GM13976 (cell line): ENCODE measurements at regions of chr1 and their contacts with region 1.

Region 1: GRCh38 chr1:163071405-163072255 is 2.5 kb downstream of the RGS4 start:
- DNase-seq: peak; percentile 27
- CTCF ChIP-seq: peak; percentile 77

Region 2: DNA sequence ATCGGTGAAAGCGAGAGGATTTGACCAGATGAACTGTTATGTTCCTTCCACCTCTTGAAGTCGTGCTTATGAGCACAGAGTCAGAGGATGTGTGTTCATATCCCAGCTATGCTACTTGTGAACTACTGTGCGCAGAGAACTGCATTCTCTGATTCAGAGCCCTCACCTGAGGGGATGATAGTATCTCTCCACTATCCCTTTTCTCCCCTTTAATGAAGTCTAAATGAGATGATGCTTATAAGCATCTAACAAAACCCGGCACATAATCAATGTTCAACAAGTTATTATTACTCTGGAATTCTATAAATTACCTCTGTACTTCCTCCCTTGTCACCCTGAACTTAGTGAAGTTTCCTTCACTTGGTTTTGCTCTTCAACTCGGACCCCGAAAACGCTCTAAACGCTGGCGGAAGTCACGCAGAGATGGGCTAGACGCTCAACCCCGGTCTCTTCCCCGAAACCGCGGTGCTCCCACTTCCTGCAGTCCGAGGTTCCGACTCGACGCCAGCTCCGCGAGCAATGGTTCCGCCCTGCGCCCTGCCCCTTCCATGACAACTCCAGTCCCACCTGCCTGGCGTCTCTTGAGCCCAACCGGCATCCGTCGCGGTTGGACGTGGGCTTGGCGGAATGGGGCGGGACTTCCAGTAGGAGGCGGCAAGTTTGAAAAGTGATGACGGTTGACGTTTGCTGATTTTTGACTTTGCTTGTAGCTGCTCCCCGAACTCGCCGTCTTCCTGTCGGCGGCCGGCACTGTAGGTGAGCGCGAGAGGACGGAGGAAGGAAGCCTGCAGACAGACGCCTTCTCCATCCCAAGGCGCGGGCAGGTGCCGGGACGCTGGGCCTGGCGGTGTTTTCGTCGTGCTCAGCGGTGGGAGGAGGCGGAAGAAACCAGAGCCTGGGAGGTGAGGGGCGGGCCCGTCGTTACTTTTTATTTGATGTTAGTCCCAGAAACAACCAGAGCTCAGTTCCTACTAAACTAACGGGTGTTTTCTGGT is 250.0 kb after region 1 on chr1 and contains the start of gene NUF2:
- in situ Hi-C with region 1: loop called (anchors 25 kb)
- DNase-seq: peak; percentile 93
- CTCF ChIP-seq: no peak